Transverse colon (tissue), 4 donors: ENCODE measurements at regions of chr7 and their contacts with region 1.

Region 1: GRCh38 chr7:23234569-23235296 is 11.8 kb upstream of the GPNMB start:
- DNase-seq: peak; percentile 18
- H3K4me3 ChIP-seq: no peak overlapping the region
- H3K27ac ChIP-seq: peak overlapping the region in 1 of 4 donors; percentile 31
- H3K4me1 ChIP-seq: no peaks in the 10 kb centered on the region
- H3K27me3 ChIP-seq: no peaks in the 10 kb centered on the region
- CTCF ChIP-seq: no peak
- EP300 ChIP-seq: no peak
- POLR2A ChIP-seq: no peak

Region 2: DNA sequence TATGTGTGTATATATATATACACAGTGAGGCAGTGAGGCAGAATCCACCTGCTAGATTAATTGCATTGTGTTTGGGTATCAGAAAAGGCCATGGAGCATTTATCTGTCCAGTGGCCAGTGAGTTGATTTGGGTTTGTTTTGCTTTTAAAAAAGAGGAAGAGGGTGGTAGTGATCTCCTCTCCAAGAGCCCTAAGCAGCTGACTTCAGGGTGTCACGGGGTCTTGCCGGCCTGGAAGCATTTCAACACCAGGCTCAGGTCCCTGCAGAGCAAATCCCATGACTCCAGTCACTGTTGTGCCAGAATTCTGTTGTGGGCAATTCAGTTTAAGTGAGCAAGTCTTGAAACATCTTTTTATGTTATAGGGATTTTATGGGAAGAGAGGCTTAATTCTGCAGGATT is 18.7 kb before region 1 on chr7:
- in situ Hi-C with region 1: no loop called
- intact Hi-C with region 1: loop called (anchors 2 kb)
- DNase-seq: peak; percentile 26
- H3K4me3 ChIP-seq: no peak overlapping the region
- H3K27ac ChIP-seq: no peak overlapping the region
- H3K4me1 ChIP-seq: peaks cover 0 to 17% (median 2%) of the 10 kb centered on the region in 4 donors
- H3K27me3 ChIP-seq: no peaks in the 10 kb centered on the region
- CTCF ChIP-seq: no peak
- EP300 ChIP-seq: no peak
- POLR2A ChIP-seq: no peak